ENCODE measurements at regions of chr5 and their contacts with region 1.

Region 1: GRCh38 chr5:32083981-32084430 is 90.1 kb downstream of the GOLPH3 start:
- DNase-seq: peak in 1 of 3 donors; percentile 55
- ATAC-seq: peak; percentile 45 to 54
- H3K4me3 ChIP-seq: no peak overlapping the region
- H3K27ac ChIP-seq: no peak overlapping the region
- H3K4me1 ChIP-seq: no peaks in the 10 kb centered on the region
- H3K27me3 ChIP-seq: no peaks in the 10 kb centered on the region

Region 2: DNA sequence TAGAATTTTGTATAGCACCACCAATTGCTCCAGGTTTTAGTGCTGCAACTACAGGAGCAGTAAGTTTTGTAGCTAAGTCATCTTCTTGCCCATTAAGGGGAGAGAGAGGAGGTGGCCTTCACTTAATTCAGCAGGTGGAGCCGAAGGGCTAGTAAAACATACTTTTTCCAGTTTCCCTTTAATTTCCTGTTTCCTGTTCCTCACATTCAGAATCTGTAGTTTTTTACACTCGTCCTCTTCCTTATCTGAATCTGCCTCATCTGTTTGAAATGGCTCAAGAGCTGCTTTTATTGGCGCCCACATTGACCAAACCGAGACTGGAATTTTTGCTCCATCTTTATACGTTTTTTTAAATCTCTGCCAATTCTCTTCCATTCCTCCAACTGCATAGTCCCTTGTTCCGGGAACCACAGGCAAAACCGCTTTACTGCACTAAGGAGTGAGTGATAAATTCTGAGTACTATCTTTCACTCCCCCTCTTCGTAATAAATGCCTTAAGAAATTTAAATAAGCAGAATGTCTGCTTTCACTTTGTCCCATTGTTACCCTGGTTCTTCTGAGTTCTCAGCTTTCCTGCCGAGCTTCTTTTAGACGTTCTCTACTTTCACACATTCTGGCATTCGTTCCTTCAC is 686.0 kb before region 1 on chr5:
- intact Hi-C with region 1: no loop called
- DNase-seq: no peak
- ATAC-seq: peak in 1 of 2 donors; percentile 25
- H3K4me3 ChIP-seq: no peak overlapping the region
- H3K27ac ChIP-seq: no peak overlapping the region
- H3K4me1 ChIP-seq: no peaks in the 10 kb centered on the region
- H3K27me3 ChIP-seq: no peaks in the 10 kb centered on the region

Region 3: DNA sequence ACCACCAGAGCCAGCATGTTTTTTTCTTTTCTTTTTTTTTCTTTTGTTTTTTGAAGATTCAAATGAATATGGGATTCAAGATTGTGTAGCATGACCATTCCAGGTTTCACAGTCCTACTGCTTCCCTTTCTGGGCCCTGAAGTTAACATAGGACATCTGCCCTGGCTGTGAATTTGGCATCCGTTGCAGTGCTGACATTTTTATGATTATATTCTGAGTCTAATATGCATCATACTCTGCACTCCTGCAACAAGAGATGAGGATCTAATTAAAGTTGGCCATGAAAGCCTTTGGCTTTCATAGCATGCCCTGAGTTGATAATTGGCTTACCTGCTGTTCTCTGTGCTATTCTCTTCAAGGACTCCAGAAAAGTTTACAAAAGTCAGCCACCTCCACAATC is 522.1 kb before region 1 on chr5:
- intact Hi-C with region 1: loop called in 1 of 4 experiments (anchors 10 kb)
- DNase-seq: no peak
- ATAC-seq: no peak
- H3K4me3 ChIP-seq: no peak overlapping the region
- H3K27ac ChIP-seq: no peak overlapping the region
- H3K4me1 ChIP-seq: no peaks in the 10 kb centered on the region
- H3K27me3 ChIP-seq: no peaks in the 10 kb centered on the region

Region 4: DNA sequence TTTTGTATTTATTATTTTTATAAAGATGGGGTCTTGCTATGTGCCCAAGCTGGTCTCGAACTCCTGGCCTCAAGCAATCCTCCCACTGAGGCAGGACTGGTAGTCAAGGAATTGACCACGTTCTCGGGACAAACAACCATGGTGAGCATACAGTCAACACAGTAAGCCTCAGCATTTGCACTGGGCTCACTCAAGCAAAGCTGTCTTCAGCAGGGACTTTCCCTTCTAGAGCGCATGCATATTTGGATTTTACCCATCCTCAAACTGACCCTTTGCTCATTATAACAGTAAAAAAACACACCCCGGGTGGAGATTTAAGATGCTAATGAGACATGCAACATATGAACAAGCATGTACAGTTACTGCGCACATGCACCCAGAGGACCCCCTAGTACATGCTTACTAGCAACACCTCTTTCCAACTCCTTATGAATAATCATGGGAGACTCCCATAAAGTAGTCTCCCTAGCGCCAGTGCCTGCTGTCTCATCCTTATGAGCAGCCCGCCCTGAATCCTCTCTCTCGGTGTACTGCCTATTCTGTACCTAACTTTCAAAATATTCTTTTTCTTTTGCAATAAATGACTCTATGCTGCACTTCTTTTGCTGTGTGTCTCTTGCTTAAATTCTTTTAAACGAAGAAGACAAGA is 510.4 kb before region 1 on chr5:
- intact Hi-C with region 1: loop called in 2 of 4 experiments (anchors 10 kb)
- DNase-seq: no peak
- ATAC-seq: no peak
- H3K4me3 ChIP-seq: no peak overlapping the region
- H3K27ac ChIP-seq: no peak overlapping the region
- H3K4me1 ChIP-seq: no peaks in the 10 kb centered on the region
- H3K27me3 ChIP-seq: no peaks in the 10 kb centered on the region

Region 5: DNA sequence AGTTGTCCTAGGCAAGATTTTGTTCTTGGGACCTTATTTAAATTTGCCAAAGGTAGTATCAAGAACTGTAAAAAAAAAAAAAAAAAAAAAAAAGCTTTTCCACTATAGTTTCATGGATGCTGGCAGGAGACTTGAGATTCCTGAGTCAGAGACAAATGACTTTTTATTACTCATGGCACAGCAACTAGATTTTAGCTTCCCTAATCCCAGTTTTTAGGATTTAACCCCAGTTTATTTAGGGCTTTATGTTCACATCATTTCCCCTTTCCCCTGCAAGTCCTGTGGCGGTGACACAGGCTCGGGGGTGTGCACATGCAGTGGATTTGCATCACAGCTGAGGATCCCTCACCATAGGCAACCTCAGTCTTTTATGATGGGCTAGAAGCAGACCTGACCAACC is 54.7 kb before region 1 on chr5:
- intact Hi-C with region 1: no loop called
- DNase-seq: no peak
- ATAC-seq: no peak
- H3K4me3 ChIP-seq: no peak overlapping the region
- H3K27ac ChIP-seq: peak overlapping the region; percentile 11
- H3K4me1 ChIP-seq: peaks cover 25% of the 10 kb centered on the region
- H3K27me3 ChIP-seq: no peaks in the 10 kb centered on the region

Region 6: GRCh38 chr5:32298059-32298415 is 214.0 kb after region 1 on chr5:
- intact Hi-C with region 1: no loop called
- DNase-seq: no peak
- ATAC-seq: peak in 1 of 2 donors; percentile 23
- H3K4me3 ChIP-seq: no peak overlapping the region
- H3K27ac ChIP-seq: no peak overlapping the region
- H3K4me1 ChIP-seq: peaks cover 16% of the 10 kb centered on the region
- H3K27me3 ChIP-seq: no peaks in the 10 kb centered on the region